ENCODE measurements at regions of chr22 and their contacts with region 1.

Region 1: GRCh38 chr22:18001040-18001893 is 23.1 kb downstream of the MICAL3 start:
- DNase-seq: peak; percentile 88
- ATAC-seq: peak; percentile 66
- H3K4me3 Mint-ChIP-seq: peak overlapping the region; percentile 92
- H3K27ac Mint-ChIP-seq: peak overlapping the region; percentile 99
- H3K4me1 Mint-ChIP-seq: peaks cover 85% of the 10 kb centered on the region
- H3K27me3 Mint-ChIP-seq: no peaks in the 10 kb centered on the region
- CTCF ChIP-seq: no peak

Region 2: GRCh38 chr22:17638432-17639246 is 362.6 kb before region 1 on chr22 and contains the start of gene BCL2L13:
- CTCF ChIA-PET with region 1: no interaction called
- POLR2A ChIA-PET with region 1: interaction called, 3 read pairs
- intact Hi-C with region 1: loop called (anchors 1 kb)
- DNase-seq: peak; percentile 87
- ATAC-seq: peak; percentile 93
- H3K4me3 Mint-ChIP-seq: peak within 1 kb of the TSS; percentile 88
- H3K27ac Mint-ChIP-seq: peak within 1 kb of the TSS; percentile 94
- H3K4me1 Mint-ChIP-seq: peaks cover 28% of the 10 kb centered on the region
- H3K27me3 Mint-ChIP-seq: no peaks in the 10 kb centered on the region
- CTCF ChIP-seq: no peak
- total RNA-seq, gene BCL2L13: 30.1 and 38.7 TPM in 2 replicates

Region 3: DNA sequence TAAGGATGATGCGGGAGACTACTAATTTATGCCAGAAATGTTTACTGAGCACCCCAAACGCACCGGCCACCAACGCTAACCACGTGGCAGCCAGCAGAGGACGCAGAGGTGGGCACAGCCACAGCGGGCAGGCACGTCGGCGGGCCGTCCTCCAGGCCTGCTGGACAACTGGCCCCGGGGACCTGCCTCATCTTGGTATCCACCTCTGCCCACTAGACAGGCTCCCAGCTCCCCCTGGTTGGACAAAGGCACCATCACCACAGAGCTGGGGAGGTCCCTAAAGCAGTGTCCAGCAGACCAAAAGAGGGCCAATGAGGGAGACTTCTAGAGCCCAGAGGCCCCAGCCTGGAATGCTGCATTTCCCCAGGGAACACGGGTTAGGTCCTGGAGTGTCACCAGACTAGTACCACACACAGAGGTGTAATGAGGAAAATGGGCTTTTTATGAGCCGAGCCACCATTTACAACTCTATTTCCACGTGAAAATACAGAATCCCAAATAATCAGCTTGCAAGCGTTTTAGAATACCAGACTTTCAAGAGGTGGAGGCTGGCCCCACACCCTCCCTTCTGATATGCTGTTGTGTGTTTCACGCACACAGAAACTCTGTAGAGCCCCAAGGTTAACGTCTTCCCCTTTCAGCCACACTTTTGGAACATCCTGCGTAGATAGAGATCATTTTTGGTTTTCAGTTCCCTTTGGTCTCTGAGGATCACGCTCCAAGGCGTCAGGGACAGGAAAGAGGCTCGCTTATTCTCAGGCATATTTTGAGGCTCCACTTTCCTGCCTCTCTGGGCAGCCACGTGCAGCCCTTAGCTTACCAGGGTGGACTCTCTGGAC is 203.3 kb before region 1 on chr22:
- CTCF ChIA-PET with region 1: interaction called, 3 read pairs
- POLR2A ChIA-PET with region 1: interaction called, 4 read pairs
- intact Hi-C with region 1: loop called (anchors 5 kb)
- DNase-seq: peak; percentile 41
- ATAC-seq: peak; percentile 62
- H3K4me3 Mint-ChIP-seq: peak overlapping the region; percentile 49
- H3K27ac Mint-ChIP-seq: peak overlapping the region; percentile 99
- H3K4me1 Mint-ChIP-seq: peaks cover 87% of the 10 kb centered on the region
- H3K27me3 Mint-ChIP-seq: no peaks in the 10 kb centered on the region
- CTCF ChIP-seq: no peak

Region 4: GRCh38 chr22:17964643-17965042 is 36.6 kb before region 1 on chr22:
- CTCF ChIA-PET with region 1: no interaction called
- POLR2A ChIA-PET with region 1: interaction called, 19 read pairs
- intact Hi-C with region 1: loop called (anchors 2 kb)
- DNase-seq: peak; percentile 37
- ATAC-seq: peak; percentile 89
- H3K4me3 Mint-ChIP-seq: peak overlapping the region; percentile 56
- H3K27ac Mint-ChIP-seq: peak overlapping the region; percentile 88
- H3K4me1 Mint-ChIP-seq: peaks cover 84% of the 10 kb centered on the region
- H3K27me3 Mint-ChIP-seq: no peaks in the 10 kb centered on the region
- CTCF ChIP-seq: no peak

Region 5: GRCh38 chr22:18057568-18058209 is 56.4 kb after region 1 on chr22:
- CTCF ChIA-PET with region 1: no interaction called
- POLR2A ChIA-PET with region 1: interaction called, 41 read pairs
- intact Hi-C with region 1: loop called (anchors 1 kb)
- DNase-seq: peak; percentile 53
- ATAC-seq: peak; percentile 83
- H3K4me3 Mint-ChIP-seq: peak overlapping the region; percentile 71
- H3K27ac Mint-ChIP-seq: peak overlapping the region; percentile 97
- H3K4me1 Mint-ChIP-seq: peaks cover 49% of the 10 kb centered on the region
- H3K27me3 Mint-ChIP-seq: no peaks in the 10 kb centered on the region
- CTCF ChIP-seq: no peak